CD8-positive, alpha-beta T cell (primary cell): ENCODE measurements at regions of chr10 and their contacts with region 1.

Region 1: DNA sequence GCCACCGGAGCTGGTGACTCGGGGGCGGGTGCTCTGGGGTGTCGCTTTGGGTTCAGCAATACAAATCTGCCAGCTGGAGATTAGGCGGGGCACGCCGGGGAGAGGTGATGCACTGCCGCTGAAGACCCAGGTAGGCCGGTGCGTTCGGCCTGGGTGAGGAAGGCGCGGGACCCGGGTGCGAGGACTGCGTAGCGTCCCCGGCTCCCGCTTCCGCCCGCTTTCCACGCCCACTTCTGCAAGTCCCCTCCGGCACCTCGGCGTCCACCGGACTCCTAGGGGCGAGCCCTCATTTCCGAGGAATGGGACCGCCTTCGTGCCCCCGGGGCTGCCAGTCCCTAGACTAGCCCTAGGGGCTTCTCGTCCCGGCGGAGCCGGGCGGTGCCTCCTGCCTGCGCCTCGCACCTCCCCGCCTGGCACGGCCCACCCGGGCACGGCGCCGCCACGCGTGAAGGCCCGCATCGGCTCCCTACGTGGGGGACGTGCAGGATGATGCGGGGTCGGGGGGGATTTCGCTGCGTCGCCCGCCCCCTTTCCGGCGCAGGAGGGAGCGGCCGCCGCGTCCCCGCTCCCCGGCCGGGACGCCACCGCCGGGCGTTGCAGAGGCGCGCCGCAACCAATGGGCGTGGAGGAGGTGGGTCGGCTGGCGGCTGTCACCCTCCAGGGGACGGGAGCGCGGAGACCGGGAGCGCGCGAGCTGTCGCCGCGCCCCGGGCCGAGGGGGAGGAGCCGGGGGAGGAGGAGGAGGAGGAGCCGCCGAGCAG is 40.0 kb downstream of the HK1 start:
- DNase-seq: peak; percentile 81 to 96 (median 90)
- ATAC-seq: peak; percentile 89
- H3K4me3 ChIP-seq: peak overlapping the region; percentile 92 to 99
- H3K4me3 Mint-ChIP-seq: peak overlapping the region; percentile 95
- H3K27ac ChIP-seq: peak overlapping the region; percentile 89 to 92
- H3K27ac Mint-ChIP-seq: peak overlapping the region; percentile 89
- H3K4me1 ChIP-seq: peaks cover 32% of the 10 kb centered on the region
- H3K4me1 Mint-ChIP-seq: peaks cover 38% of the 10 kb centered on the region
- H3K27me3 ChIP-seq: no peaks in the 10 kb centered on the region
- H3K27me3 Mint-ChIP-seq: no peaks in the 10 kb centered on the region
- CTCF ChIP-seq: no peak

Region 2: GRCh38 chr10:69344591-69345252 is 26.4 kb after region 1 on chr10:
- CTCF ChIA-PET with region 1: interaction called, 5 read pairs
- POLR2A ChIA-PET with region 1: interaction called, 4 read pairs
- intact Hi-C with region 1: loop called in 1 of 2 experiments (anchors 1 kb)
- DNase-seq: peak in 6 of 9 experiments; percentile 27 to 65 (median 42)
- ATAC-seq: peak; percentile 77
- H3K4me3 ChIP-seq: peak overlapping the region in 1 of 2 experiments; percentile 29
- H3K4me3 Mint-ChIP-seq: peak overlapping the region; percentile 66
- H3K27ac ChIP-seq: peak overlapping the region; percentile 8 to 63
- H3K27ac Mint-ChIP-seq: peak overlapping the region; percentile 93
- H3K4me1 ChIP-seq: peaks cover 57% of the 10 kb centered on the region
- H3K4me1 Mint-ChIP-seq: peaks cover 78% of the 10 kb centered on the region
- H3K27me3 ChIP-seq: no peaks in the 10 kb centered on the region
- H3K27me3 Mint-ChIP-seq: no peaks in the 10 kb centered on the region
- CTCF ChIP-seq: no peak

Region 3: GRCh38 chr10:69360485-69361324 is 42.4 kb after region 1 on chr10:
- CTCF ChIA-PET with region 1: interaction called, 3 read pairs
- POLR2A ChIA-PET with region 1: interaction called, 9 read pairs
- intact Hi-C with region 1: loop called (anchors 2 to 5 kb)
- DNase-seq: no peak
- ATAC-seq: no peak
- H3K4me3 ChIP-seq: no peak overlapping the region
- H3K4me3 Mint-ChIP-seq: peak overlapping the region; percentile 49
- H3K27ac ChIP-seq: no peak overlapping the region
- H3K27ac Mint-ChIP-seq: peak overlapping the region; percentile 95
- H3K4me1 ChIP-seq: peaks cover 47% of the 10 kb centered on the region
- H3K4me1 Mint-ChIP-seq: peaks cover 59% of the 10 kb centered on the region
- H3K27me3 ChIP-seq: no peaks in the 10 kb centered on the region
- H3K27me3 Mint-ChIP-seq: no peaks in the 10 kb centered on the region
- CTCF ChIP-seq: no peak

Region 4: DNA sequence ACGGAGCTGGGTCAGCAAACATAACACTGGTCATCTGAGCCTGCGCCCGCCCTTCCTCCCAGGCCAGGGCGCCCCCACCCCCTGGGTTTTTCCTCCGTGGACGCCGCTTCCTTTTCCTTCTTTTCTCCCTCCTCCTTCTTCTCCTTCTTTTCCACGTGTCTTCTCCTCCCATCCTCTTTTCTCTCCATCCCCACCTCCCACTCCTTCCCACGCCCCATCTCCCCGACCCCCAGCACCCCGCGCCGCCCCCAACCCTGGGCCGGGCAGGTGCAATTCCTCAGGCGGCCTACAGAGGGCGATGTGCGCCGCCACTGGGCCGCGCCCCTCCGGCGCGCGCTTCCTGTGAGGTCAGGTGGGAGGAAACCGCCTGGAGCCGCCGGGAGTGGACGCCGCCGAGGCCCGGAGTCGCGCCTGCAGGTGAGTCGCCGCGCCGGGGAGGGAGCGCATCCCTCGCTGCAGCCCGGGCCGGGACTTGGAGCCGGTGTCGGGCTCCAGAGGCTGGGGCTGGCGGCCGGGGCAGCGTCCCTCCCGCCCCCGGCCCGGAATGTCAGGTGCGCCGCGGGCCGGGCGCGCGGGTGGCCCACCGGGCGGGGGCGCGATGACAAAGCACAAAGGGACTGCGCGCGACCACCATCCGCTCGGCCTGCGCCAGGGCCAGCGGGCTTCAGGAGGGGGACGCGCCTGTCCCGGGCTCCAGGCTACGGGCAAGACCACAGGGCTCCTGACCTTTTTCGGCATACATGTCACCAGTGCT is 311.8 kb after region 1 on chr10 and contains the start of gene FAM241B:
- CTCF ChIA-PET with region 1: no interaction called
- POLR2A ChIA-PET with region 1: no interaction called
- intact Hi-C with region 1: loop called in 1 of 2 experiments (anchors 2 kb)
- DNase-seq: peak; percentile 40 to 86 (median 75)
- ATAC-seq: peak; percentile 99
- H3K4me3 ChIP-seq: peak within 1 kb of the TSS; percentile 48 to 83
- H3K4me3 Mint-ChIP-seq: peak within 1 kb of the TSS; percentile 76
- H3K27ac ChIP-seq: peak within 1 kb of the TSS in 1 of 2 experiments; percentile 37
- H3K27ac Mint-ChIP-seq: peak within 1 kb of the TSS; percentile 70
- H3K4me1 ChIP-seq: peaks cover 21% of the 10 kb centered on the region
- H3K4me1 Mint-ChIP-seq: peaks cover 24% of the 10 kb centered on the region
- H3K27me3 ChIP-seq: no peaks in the 10 kb centered on the region
- H3K27me3 Mint-ChIP-seq: no peaks in the 10 kb centered on the region
- CTCF ChIP-seq: peak; percentile 100
- total RNA-seq, gene FAM241B: 7.4 to 9.1 TPM